Calu3 (cell line): ENCODE measurements at regions of chr2 and their contacts with region 1.

Region 1: GRCh38 chr2:130797493-130798435 is 39.0 kb upstream of the ARHGEF4 start:
- DNase-seq: peak; percentile 95
- H3K4me3 Mint-ChIP-seq: peak overlapping the region; percentile 70
- H3K27ac Mint-ChIP-seq: no peak overlapping the region
- H3K4me1 Mint-ChIP-seq: no peaks in the 10 kb centered on the region
- H3K27me3 Mint-ChIP-seq: no peaks in the 10 kb centered on the region
- CTCF ChIP-seq: peak; percentile 85

Region 2: DNA sequence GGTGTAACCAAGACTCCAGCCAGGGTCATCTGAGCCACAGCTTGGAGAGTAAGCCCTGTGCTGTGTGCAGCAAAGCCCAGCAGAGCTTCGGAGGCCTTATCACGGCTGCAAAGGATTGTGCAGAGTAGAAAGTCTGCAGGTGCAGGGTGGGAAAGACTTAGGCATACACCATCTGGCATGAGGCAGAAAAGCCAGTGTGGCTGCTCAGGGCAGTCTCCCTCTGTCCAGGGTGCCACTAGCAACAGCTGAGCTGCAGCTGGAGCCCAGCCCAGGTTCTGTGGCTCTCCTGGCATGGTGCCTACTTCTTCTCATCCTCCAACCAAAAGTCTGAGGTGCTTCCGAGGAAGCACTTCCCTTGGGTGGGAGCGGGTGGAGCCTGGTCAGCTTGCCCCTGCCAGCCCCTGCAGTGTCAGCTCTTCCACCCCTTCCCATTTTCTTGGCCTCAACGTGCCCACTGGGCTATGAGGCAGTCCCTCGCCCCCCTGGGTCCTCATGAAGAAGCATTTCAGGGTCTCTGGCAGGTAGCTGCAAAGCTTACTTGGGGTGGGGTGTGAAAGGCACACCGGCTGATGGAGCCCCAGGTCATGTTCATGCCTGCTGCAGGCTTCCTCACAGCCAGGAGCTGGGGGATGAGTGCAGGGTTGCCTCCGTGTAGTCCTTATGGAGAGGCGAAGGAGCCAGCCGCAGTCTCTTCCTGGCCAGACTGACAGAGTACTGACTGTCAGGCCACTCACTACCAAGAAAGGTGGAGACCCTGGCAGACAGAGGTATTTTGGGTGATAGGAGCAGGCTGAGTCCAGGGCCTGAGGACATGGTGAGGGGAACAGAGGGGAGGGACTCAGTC is 37.6 kb before region 1 on chr2:
- CTCF ChIA-PET with region 1: no interaction called
- intact Hi-C with region 1: no loop called
- DNase-seq: no peak
- H3K4me3 Mint-ChIP-seq: no peak overlapping the region
- H3K27ac Mint-ChIP-seq: no peak overlapping the region
- H3K4me1 Mint-ChIP-seq: no peaks in the 10 kb centered on the region
- H3K27me3 Mint-ChIP-seq: peaks cover 71% of the 10 kb centered on the region
- CTCF ChIP-seq: no peak

Region 3: GRCh38 chr2:130873700-130874346 is 76.1 kb after region 1 on chr2:
- CTCF ChIA-PET with region 1: interaction called, 34 read pairs
- intact Hi-C with region 1: loop called (anchors 1 kb)
- DNase-seq: peak; percentile 79
- H3K4me3 Mint-ChIP-seq: no peak overlapping the region
- H3K27ac Mint-ChIP-seq: no peak overlapping the region
- H3K4me1 Mint-ChIP-seq: peaks cover 3% of the 10 kb centered on the region
- H3K27me3 Mint-ChIP-seq: peaks cover 3% of the 10 kb centered on the region
- CTCF ChIP-seq: peak; percentile 28

Region 4: DNA sequence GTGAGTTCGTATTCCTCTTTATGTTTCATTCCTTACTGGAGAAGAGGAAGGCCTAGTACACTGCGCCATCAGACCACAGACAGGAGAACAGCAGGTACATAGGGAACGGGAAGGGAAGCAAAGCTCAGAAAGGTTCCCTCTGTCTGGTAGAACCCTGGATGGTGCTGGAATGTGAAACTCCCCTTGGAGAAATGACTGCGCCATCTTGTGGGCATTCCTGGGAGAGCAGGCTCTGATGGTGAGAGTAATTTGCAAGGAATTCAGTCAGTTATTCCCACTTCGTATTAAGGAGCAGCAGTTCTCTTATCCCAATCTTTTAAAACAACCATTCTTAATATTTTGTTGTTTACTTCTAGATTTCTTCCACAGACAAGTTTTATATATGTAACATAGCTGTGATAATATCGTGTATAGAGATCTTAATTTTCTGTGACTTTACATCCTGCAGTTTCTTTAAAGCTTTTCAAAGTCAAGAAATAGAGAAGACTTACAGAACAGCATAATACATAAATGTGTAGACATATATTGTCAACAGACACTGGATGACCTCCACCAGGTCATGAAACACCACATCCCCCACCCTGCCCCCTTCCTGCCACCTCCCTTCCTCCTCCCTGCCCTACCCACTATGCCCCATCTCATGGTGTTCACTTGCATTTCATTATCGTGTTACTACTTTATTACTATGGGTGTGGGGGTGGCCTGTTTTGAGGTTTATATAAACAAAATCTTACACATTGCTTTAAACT is 122.8 kb after region 1 on chr2:
- CTCF ChIA-PET with region 1: interaction called, 13 read pairs
- intact Hi-C with region 1: loop called (anchors 1 kb)
- DNase-seq: peak; percentile 78
- H3K4me3 Mint-ChIP-seq: no peak overlapping the region
- H3K27ac Mint-ChIP-seq: no peak overlapping the region
- H3K4me1 Mint-ChIP-seq: no peaks in the 10 kb centered on the region
- H3K27me3 Mint-ChIP-seq: no peaks in the 10 kb centered on the region
- CTCF ChIP-seq: peak; percentile 82